ENCODE measurements at regions of chr12 and their contacts with region 1.

Region 1: DNA sequence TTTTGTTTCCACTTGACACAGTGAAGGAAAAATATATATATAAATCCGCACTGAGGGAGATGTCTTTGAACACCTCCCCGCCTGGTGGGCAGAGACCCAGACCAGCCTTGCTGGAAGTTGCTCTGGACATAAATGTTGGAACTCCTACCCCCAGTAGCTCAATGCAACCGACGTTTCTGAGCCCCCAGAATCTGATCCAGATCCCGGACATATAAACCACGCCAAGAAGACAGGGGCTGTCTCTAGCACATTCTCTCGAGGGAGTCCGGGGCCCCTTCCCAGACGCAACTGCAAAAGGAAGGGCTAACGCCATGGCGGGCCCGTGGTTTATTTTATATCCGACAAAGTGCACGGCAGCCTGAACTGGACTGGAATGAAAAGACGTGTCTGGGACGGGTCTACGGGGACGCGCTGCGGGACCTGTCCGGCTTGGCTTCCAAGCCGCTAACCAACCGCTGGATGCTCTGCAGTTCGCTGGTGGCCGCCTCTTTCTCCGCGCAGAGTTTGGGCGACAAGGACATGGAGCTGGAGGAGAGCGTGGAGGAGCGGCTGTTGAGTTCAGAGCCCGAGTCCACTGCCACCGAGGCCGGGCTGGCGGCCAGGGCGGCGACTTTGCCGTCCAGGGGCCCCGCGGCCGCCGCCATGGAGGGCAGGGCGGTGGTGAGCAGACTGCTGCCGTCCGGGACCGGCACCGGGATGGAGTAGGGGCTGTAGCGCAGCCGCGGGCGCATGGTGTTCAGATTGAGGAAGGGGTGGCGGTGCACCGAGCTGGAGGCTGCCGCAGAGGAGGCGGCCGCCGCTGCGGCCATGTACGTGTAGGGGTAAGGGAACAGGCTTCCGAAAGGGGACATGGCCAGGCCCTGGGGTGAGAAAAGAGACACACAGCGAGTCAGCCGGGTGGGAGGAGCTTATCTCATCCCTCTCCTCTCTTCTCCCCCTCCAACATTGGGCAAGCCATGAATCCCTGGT is 12.2 kb downstream of the TBX3 start:
- DNase-seq: no peak
- ATAC-seq: no peak
- H3K4me3 ChIP-seq: no peak overlapping the region
- H3K27ac ChIP-seq: no peak overlapping the region
- H3K4me1 ChIP-seq: no peaks in the 10 kb centered on the region
- H3K27me3 ChIP-seq: no peaks in the 10 kb centered on the region
- CTCF ChIP-seq: no peak

Region 2: DNA sequence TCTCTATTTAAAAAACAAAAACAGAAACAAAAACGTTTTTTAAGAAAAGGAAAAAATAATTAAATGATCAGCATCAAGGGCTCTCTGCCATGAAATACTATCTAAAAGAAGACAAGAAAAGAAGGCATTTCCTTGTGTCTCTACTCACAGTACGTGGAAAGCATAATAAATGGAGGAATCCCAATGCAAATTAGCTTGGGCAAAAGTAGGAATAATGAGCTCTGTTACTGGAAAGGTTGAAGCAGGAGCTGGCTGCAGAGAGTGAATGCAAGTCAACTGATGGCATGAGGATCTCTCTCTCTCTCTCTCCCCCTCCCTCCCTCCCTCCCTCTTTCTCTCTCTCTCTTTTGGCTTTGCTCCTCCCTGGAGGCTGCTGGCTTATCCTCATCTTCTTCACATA is 73.6 kb before region 1 on chr12:
- CTCF ChIA-PET with region 1: no interaction called
- POLR2A ChIA-PET with region 1: no interaction called
- in situ Hi-C with region 1: no loop called
- intact Hi-C with region 1: no loop called
- DNase-seq: no peak
- ATAC-seq: no peak
- H3K4me3 ChIP-seq: no peak overlapping the region
- H3K27ac ChIP-seq: no peak overlapping the region
- H3K4me1 ChIP-seq: no peaks in the 10 kb centered on the region
- H3K27me3 ChIP-seq: no peaks in the 10 kb centered on the region
- CTCF ChIP-seq: no peak

Region 3: GRCh38 chr12:114636723-114637483 is 34.8 kb before region 1 on chr12:
- CTCF ChIA-PET with region 1: no interaction called
- POLR2A ChIA-PET with region 1: no interaction called
- in situ Hi-C with region 1: no loop called
- intact Hi-C with region 1: no loop called
- DNase-seq: no peak
- ATAC-seq: peak; percentile 76
- H3K4me3 ChIP-seq: no peak overlapping the region
- H3K27ac ChIP-seq: no peak overlapping the region
- H3K4me1 ChIP-seq: no peaks in the 10 kb centered on the region
- H3K27me3 ChIP-seq: no peaks in the 10 kb centered on the region; the same call in 1 of the 2 replicates
- CTCF ChIP-seq: peak; percentile 75

Region 4: GRCh38 chr12:114967151-114967550 is 295.4 kb after region 1 on chr12:
- CTCF ChIA-PET with region 1: interaction called, 13 read pairs
- POLR2A ChIA-PET with region 1: no interaction called
- in situ Hi-C with region 1: no loop called
- intact Hi-C with region 1: no loop called
- DNase-seq: no peak
- ATAC-seq: no peak
- H3K4me3 ChIP-seq: no peak overlapping the region
- H3K27ac ChIP-seq: no peak overlapping the region
- H3K4me1 ChIP-seq: no peaks in the 10 kb centered on the region
- H3K27me3 ChIP-seq: no peaks in the 10 kb centered on the region
- CTCF ChIP-seq: no peak

Region 5: GRCh38 chr12:115916910-115917668 is 1245.4 kb after region 1 on chr12:
- CTCF ChIA-PET with region 1: no interaction called
- POLR2A ChIA-PET with region 1: interaction called, 12 read pairs
- in situ Hi-C with region 1: no loop called
- intact Hi-C with region 1: no loop called
- DNase-seq: peak; percentile 17
- ATAC-seq: peak; percentile 91
- H3K4me3 ChIP-seq: peak overlapping the region in 1 of 2 experiments; percentile 4; a peak in 1 of 4 replicates
- H3K27ac ChIP-seq: no peak overlapping the region
- H3K4me1 ChIP-seq: no peaks in the 10 kb centered on the region
- H3K27me3 ChIP-seq: peaks cover 6% of the 10 kb centered on the region
- CTCF ChIP-seq: peak; percentile 96

Measured in Panc1 (cell line).